PC-3 (cell line): ENCODE measurements at regions of chr19 and their contacts with region 1.

Region 1: GRCh38 chr19:5961969-5962945 is 15.7 kb downstream of the RANBP3 start:
- DNase-seq: peak; percentile 74
- ATAC-seq: peak; percentile 99
- H3K4me3 ChIP-seq: no peak overlapping the region
- H3K27ac ChIP-seq: 0 out of 2 replicates have a peak overlapping the region, but pooled peaks have one; percentile 17
- H3K4me1 ChIP-seq: peaks cover 14% of the 10 kb centered on the region
- H3K27me3 ChIP-seq: no peaks in the 10 kb centered on the region
- CTCF ChIP-seq: no peak

Region 2: DNA sequence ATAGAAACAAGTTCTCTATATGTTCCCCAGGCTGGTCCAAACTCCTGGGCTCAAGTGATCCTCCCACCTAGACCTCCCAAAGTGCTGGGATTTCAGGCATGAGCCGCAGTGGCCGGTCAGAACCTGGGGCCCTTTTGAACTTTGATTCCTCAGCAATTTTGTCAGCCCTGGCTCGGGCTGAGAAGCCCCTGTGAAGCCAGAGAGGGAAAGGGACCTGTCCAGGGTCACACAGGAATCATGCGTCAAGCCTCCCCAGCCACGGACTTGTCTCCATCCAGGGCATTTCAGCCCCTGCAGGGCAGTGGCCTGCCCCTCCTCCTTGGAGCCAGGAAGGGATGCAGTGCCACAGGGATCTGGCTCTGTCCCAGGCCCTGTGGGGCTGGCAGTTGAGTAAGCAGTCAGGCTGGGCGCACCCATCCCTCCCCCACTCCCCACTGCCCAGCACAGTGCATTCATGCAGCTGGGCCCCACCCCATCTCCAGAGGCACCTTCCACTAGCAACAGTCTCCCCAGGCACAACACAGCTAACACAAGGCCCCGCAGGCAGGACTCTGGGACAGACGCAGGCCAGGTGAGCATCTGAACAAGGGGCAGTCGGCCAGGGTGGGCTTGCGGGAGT is 48.4 kb before region 1 on chr19 and contains the start of gene CAPS:
- CTCF ChIA-PET with region 1: no interaction called
- POLR2A ChIA-PET with region 1: no interaction called
- intact Hi-C with region 1: loop called (anchors 2 kb)
- DNase-seq: peak; percentile 97
- ATAC-seq: peak; percentile 96
- H3K4me3 ChIP-seq: peak within 1 kb of the TSS; percentile 58
- H3K27ac ChIP-seq: peak within 1 kb of the TSS; percentile 84
- H3K4me1 ChIP-seq: peaks cover 28% of the 10 kb centered on the region
- H3K27me3 ChIP-seq: no peaks in the 10 kb centered on the region
- CTCF ChIP-seq: no peak
- total RNA-seq, gene CAPS: 255 and 280 TPM in 2 replicates

Region 3: DNA sequence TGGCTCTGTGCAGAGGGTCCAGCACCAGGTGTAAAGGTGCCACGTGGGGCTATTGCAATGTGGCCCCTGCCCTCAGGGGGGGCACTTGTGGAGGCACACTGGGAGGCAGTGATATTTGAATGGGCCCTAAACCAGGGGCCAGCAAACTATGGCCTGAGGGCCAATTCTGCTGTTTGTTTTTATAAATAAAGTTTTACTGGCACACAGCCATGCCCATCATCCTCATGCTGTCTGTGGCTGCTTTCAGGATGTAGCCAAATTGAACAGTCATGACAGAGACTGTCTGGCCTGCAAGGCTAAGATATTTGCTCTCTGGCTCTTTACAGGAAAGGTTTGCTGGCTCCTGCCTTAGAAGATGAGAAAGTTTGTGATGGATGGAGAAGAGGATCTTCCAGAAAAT is 49.5 kb after region 1 on chr19:
- CTCF ChIA-PET with region 1: no interaction called
- POLR2A ChIA-PET with region 1: no interaction called
- intact Hi-C with region 1: no loop called
- DNase-seq: no peak
- ATAC-seq: no peak
- H3K4me3 ChIP-seq: no peak overlapping the region
- H3K27ac ChIP-seq: no peak overlapping the region
- H3K4me1 ChIP-seq: no peaks in the 10 kb centered on the region
- H3K27me3 ChIP-seq: no peaks in the 10 kb centered on the region
- CTCF ChIP-seq: no peak